Gastrocnemius medialis (tissue), 4 donors: ENCODE measurements at regions of chr2 and their contacts with region 1.

Region 1: GRCh38 chr2:200483729-200484198 is 26.1 kb downstream of the KCTD18 start:
- DNase-seq: no peak
- ATAC-seq: no peak
- H3K4me3 ChIP-seq: no peak overlapping the region
- H3K27ac ChIP-seq: no peak overlapping the region
- H3K4me1 ChIP-seq: peaks cover 0 to 3% of the 10 kb centered on the region in 2 donors
- H3K27me3 ChIP-seq: no peaks in the 10 kb centered on the region
- CTCF ChIP-seq: no peak
- POLR2A ChIP-seq: no peak

Region 2: DNA sequence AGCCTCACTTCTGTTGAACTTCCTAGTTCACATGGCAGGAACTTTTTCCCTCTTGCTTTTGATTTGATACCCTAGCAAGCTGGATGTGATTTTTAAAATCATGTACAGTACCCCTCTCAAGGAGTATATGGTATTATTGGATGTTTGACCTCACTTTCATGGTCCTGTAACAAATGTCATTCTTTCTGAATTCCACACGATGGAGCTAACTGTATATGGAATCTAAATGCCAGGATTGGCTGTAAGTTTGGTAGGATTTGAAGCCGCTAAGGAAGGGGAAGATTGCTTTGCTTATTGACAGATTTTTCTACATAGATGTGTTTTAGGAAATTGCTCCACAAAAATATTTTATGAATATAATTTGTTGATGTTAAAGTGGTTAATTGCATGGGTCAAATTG is 510.1 kb before region 1 on chr2:
- in situ Hi-C with region 1: loop called in 3 of 4 experiments (anchors 5 kb)
- intact Hi-C with region 1: no loop called
- DNase-seq: no peak
- ATAC-seq: no peak
- H3K4me3 ChIP-seq: no peak overlapping the region
- H3K27ac ChIP-seq: no peak overlapping the region
- H3K4me1 ChIP-seq: no peaks in the 10 kb centered on the region
- H3K27me3 ChIP-seq: no peaks in the 10 kb centered on the region
- CTCF ChIP-seq: peak in 4 of 5 experiments; percentile 13 to 30 (median 20)
- POLR2A ChIP-seq: no peak

Region 3: DNA sequence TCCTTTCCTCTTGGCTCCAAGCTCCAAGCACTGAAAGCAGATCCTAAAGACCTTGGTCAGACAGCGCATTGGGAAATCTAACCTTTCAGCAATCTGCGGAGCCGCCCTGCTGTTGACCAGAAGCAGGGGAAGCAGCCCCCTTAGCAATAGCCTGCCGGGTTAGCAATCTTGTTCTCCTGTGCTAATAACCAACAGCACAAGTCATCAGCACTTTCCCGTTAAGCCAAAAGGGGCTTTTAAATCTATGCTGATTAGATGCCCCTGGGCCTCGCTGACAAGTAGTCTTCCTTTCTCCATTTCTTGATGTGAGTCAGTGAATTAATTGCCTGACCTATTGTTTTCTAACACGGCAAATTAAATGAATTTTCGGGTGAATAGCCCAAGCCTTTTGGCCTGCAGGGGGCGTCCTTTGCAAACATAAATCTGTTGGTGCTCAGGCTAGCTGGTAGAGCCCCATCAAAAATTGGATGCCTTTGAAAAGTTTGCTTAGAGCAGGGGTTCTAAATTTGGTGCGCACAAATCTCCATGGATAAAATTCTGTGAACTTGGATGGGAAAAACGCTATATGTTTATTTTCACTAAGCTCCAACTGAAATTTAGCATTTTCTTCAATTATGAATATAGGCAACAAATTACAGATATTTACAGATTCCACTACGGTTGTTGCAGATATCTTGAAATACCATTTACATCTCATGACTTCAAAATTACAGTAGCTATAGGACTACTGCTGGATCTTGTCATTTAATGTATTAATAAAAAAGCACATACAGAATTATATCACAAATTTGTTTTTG is 503.7 kb before region 1 on chr2:
- in situ Hi-C with region 1: loop called in 3 of 4 experiments (anchors 5 kb)
- intact Hi-C with region 1: loop called (anchors 1 kb)
- DNase-seq: peak; percentile 40 to 55
- ATAC-seq: peak; percentile 63 to 76
- H3K4me3 ChIP-seq: peak overlapping the region in 3 of 4 donors; percentile 10 to 32 (median 22)
- H3K27ac ChIP-seq: no peak overlapping the region
- H3K4me1 ChIP-seq: peaks cover 0 to 8% of the 10 kb centered on the region in 2 donors
- H3K27me3 ChIP-seq: no peaks in the 10 kb centered on the region
- CTCF ChIP-seq: peak; percentile 71 to 88 (median 79)
- POLR2A ChIP-seq: no peak

Region 4: GRCh38 chr2:199985625-199986207 is 498.0 kb before region 1 on chr2:
- in situ Hi-C with region 1: loop called in 1 of 4 experiments (anchors 5 kb)
- intact Hi-C with region 1: loop called (anchors 1 kb)
- DNase-seq: peak; percentile 6 to 43
- ATAC-seq: peak in 1 of 2 donors; percentile 65
- H3K4me3 ChIP-seq: no peak overlapping the region
- H3K27ac ChIP-seq: no peak overlapping the region
- H3K4me1 ChIP-seq: peaks cover 0 to 6% of the 10 kb centered on the region in 2 donors
- H3K27me3 ChIP-seq: no peaks in the 10 kb centered on the region
- CTCF ChIP-seq: peak in 2 of 5 experiments; percentile 47 to 57
- POLR2A ChIP-seq: no peak

Region 5: DNA sequence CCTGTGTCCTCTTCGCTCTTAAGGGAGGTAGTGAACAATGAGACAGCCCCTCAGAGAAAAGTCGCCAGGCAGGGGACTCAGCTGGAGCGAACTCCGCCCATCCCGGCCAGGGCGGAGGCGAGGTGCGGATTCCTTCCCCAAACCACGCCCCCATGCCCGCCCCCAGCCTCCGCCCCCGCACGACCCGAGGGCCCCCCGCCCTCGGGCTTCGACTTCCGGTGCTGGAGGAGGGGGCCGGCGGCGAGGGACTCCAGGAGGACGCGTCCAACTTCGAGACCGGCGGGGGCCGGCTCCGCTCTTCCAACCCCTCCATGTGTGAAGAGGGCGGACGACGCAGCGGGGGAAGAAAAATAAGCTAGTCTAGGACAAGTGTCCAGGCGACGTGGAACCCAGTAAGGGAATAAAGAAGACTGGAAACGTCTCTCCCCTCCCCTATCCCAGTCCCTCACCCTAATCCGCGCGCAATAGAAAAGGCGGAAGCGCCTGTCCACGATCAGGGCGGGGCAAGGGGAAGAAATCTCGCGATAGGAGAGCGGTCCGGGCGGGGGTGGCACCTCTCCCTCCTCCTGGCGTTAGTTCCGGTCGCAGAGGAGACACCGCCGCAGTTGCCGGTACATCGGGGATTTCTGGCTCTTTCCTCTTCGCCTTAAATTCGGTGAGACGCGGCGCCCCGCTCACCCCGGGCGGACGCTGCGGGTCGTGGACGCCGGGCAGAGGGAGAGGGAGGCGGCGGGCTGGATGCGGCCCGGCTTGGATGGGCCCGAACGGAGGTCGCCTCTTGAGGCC is 327.8 kb after region 1 on chr2 and contains the start of gene BZW1:
- in situ Hi-C with region 1: no loop called
- intact Hi-C with region 1: no loop called
- DNase-seq: peak; percentile 95
- ATAC-seq: peak; percentile 86 to 88
- H3K4me3 ChIP-seq: peak within 1 kb of the TSS; percentile 77 to 98 (median 92)
- H3K27ac ChIP-seq: peak within 1 kb of the TSS; percentile 95 to 99 (median 98)
- H3K4me1 ChIP-seq: peaks cover 31 to 34% of the 10 kb centered on the region in 2 donors
- H3K27me3 ChIP-seq: no peaks in the 10 kb centered on the region
- CTCF ChIP-seq: no peak
- POLR2A ChIP-seq: peak; percentile 95 to 96
- total RNA-seq, gene BZW1: 204 to 317 (median 240) TPM